ENCODE measurements at regions of chr10 and their contacts with region 1.

Region 1: GRCh38 chr10:90751107-90751997 is 106.5 kb downstream of the HTR7 start:
- DNase-seq: peak; percentile 32 to 58 (median 38)
- ATAC-seq: peak; percentile 86
- H3K4me3 ChIP-seq: no peak overlapping the region
- H3K27ac ChIP-seq: no peak overlapping the region
- H3K4me1 ChIP-seq: no peaks in the 10 kb centered on the region
- H3K27me3 ChIP-seq: no peaks in the 10 kb centered on the region
- CTCF ChIP-seq: peak; percentile 44 to 65 (median 57); a peak in 5 of 6 replicates
- EP300 ChIP-seq: no peak
- POLR2A ChIP-seq: no peak
- RAD21 ChIP-seq: peak; percentile 54 to 68

Region 2: GRCh38 chr10:90658791-90659190 is 92.6 kb before region 1 on chr10:
- CTCF ChIA-PET with region 1: no interaction called
- POLR2A ChIA-PET with region 1: no interaction called
- in situ Hi-C with region 1: no loop called
- intact Hi-C with region 1: no loop called
- DNase-seq: no peak
- ATAC-seq: no peak
- H3K4me3 ChIP-seq: no peak overlapping the region
- H3K27ac ChIP-seq: no peak overlapping the region
- H3K4me1 ChIP-seq: no peaks in the 10 kb centered on the region
- H3K27me3 ChIP-seq: no peaks in the 10 kb centered on the region
- CTCF ChIP-seq: no peak
- EP300 ChIP-seq: no peak
- POLR2A ChIP-seq: no peak
- RAD21 ChIP-seq: no peak

Region 3: GRCh38 chr10:90813592-90814365 is 62.4 kb after region 1 on chr10:
- CTCF ChIA-PET with region 1: no interaction called
- POLR2A ChIA-PET with region 1: no interaction called
- in situ Hi-C with region 1: no loop called
- intact Hi-C with region 1: no loop called
- DNase-seq: no peak
- ATAC-seq: no peak
- H3K4me3 ChIP-seq: no peak overlapping the region
- H3K27ac ChIP-seq: no peak overlapping the region
- H3K4me1 ChIP-seq: no peaks in the 10 kb centered on the region
- H3K27me3 ChIP-seq: no peaks in the 10 kb centered on the region
- CTCF ChIP-seq: no peak
- EP300 ChIP-seq: no peak
- POLR2A ChIP-seq: no peak
- RAD21 ChIP-seq: no peak

Region 4: DNA sequence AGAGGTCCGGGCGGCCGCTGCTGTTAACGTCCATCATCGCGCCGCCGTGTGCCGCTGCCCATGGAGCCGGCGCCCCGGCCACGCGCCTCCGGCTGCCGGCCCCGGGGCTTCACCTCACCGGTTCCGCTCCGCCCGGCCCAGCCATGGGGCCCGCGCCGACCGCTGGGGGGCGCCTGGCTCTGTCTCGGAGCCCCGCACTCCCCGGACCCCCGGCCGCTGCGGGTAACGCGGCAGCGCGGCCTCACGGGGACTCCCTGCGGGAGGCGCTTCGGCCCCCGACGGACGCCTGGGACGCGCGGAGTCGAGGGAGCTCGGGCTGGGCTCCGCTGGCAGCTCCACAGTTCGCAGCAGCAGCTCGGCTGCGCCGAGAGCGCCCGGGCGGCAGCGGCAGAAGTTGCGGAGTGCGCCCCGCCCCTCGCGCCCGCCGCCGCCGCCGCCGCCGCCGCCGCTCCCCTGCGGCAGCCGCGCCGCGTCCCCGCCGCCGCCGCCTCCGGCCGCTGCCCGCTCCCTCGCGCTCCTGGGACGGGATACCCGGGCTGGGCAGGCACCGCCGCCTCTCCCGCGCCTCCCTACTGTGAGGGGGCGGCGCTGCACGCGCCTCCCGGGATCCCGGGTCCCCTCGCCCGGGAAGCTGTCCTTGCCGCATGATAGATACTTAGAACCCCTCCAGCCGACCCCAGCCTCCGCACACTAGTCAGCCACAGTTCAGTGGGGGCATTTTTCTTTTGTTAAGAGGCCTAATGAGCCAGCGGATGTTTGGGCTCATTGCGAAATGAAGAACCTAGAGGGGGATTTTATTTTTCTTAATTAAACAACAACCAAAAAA is 106.5 kb after region 1 on chr10 and contains the start of gene HTR7:
- CTCF ChIA-PET with region 1: interaction called, 7 read pairs
- POLR2A ChIA-PET with region 1: no interaction called
- in situ Hi-C with region 1: loop called (anchors 10 kb)
- intact Hi-C with region 1: loop called (anchors 1 kb)
- DNase-seq: peak; percentile 60 to 74 (median 68)
- ATAC-seq: peak; percentile 97
- H3K4me3 ChIP-seq: peak within 1 kb of the TSS; percentile 54
- H3K27ac ChIP-seq: no peak within 1 kb of the TSS
- H3K4me1 ChIP-seq: peaks cover 0 to 15% of the 10 kb centered on the region in 2 experiments; a peak in 3 of 5 replicates
- H3K27me3 ChIP-seq: peaks cover 8 to 13% of the 10 kb centered on the region in 2 experiments; a peak in 4 of 5 replicates
- CTCF ChIP-seq: peak; percentile 33 to 51 (median 39); a peak in 3 of 6 replicates
- EP300 ChIP-seq: no peak
- POLR2A ChIP-seq: no peak
- RAD21 ChIP-seq: no peak
- polyA plus RNA-seq, gene HTR7: 0.07 to 0.08 TPM

Region 5: DNA sequence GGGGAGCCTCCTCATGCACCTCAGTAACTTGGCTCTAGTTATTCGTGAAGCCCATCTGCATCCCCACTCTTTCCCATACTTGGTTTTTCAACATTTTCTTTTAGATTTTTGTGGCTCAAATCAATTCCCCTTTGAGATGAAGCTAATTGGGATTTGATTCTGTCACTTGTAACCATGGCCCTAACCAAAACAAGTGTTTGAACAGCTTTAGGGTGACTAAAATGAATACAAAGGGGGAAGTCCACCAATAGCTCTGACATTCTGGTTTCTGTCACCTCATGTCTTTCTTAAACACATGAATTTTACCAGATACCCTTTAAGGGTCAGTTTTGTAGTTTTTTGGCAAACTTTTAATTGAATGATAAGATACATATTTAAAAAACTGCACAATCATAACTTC is 556.1 kb after region 1 on chr10:
- CTCF ChIA-PET with region 1: no interaction called
- POLR2A ChIA-PET with region 1: no interaction called
- in situ Hi-C with region 1: no loop called
- intact Hi-C with region 1: no loop called
- DNase-seq: no peak
- ATAC-seq: no peak
- H3K4me3 ChIP-seq: no peak overlapping the region
- H3K27ac ChIP-seq: no peak overlapping the region
- H3K4me1 ChIP-seq: peaks cover 1 to 4% of the 10 kb centered on the region in 2 experiments; a peak in 3 of 5 replicates
- H3K27me3 ChIP-seq: no peaks in the 10 kb centered on the region
- CTCF ChIP-seq: no peak
- EP300 ChIP-seq: no peak
- POLR2A ChIP-seq: no peak
- RAD21 ChIP-seq: no peak